ENCODE measurements at regions of chr9 and their contacts with region 1.

Region 1: DNA sequence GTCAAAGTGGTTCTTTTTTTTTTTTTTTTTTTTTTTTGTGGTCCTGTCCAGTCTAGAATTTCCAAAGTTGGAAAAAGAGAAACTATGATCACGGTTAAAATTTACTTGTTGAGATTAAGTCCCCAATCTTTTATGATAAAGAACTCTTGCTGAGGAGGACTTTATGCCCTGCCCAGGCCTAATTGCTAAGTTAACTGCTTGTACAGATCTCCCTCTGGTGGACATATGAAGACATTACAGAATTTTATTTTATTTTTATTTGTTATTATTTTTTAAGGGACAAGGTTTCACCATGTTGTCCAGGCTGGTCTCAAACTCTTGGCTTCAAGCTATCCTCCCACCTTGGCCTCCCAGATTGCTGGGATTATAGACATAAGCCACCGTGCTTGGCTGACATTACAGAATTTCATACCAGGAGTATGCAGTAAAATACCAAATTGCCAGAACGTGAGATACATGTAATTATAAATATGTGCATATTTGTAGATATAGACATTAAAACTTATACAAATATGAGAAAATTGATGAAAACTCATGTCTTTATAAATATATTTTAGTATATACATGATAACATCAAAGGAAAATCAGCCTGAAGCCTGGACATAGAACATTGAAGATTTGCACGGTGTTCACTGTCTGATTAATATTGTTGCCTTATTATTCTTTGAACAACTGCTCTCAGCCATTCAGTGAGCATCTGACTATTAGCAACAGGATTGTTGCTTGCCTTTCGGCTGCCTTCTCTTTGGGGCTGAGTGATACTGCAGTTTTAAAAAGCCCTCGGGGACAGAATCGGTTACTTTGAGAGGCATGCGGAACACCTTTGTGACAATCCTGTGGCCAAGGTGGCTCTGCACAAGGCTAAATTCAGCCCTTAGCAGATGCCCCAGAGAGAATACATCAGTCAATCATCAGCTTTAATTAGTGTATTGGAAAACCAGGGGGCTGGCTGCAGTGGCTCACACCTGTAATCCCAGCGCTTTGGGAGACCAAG is 91.0 kb downstream of the RFK start:
- DNase-seq: peak; percentile 21
- H3K4me3 Mint-ChIP-seq: no peak overlapping the region
- H3K27ac Mint-ChIP-seq: no peak overlapping the region
- H3K4me1 Mint-ChIP-seq: no peaks in the 10 kb centered on the region
- H3K27me3 Mint-ChIP-seq: peaks cover 11% of the 10 kb centered on the region

Region 2: GRCh38 chr9:74773886-74774479 is 1529.3 kb before region 1 on chr9:
- CTCF ChIA-PET with region 1: no interaction called
- intact Hi-C with region 1: loop called (anchors 5 kb)
- DNase-seq: peak; percentile 85
- H3K4me3 Mint-ChIP-seq: no peak overlapping the region
- H3K27ac Mint-ChIP-seq: no peak overlapping the region
- H3K4me1 Mint-ChIP-seq: peaks cover 14% of the 10 kb centered on the region
- H3K27me3 Mint-ChIP-seq: peaks cover 14% of the 10 kb centered on the region

Region 3: DNA sequence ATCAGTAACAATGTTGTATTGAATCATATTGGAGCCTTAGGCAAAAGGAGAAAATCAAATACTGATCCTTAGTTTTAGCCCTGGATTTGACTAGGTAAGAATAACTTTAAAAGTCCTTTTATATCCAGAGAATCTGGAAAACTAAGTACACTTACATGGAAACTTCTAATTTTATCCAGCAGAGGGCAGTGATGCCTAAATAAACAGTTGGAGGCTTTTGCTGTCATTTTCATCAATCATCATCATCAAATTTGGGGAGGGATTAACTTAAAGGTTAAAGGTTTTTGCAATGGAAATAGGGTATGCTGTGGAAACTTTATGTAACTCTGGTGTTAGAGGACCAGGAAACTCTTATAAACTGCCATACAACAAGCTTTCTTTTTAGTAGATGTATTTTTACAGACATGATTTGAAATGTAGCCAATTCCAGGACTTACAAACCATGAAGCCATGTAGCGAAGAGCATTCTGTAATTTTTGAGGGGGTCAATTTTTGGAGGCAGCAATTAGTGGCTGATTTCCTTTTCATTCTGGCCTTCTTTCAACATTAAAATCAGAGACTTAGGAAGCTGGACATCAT is 1102.3 kb before region 1 on chr9:
- CTCF ChIA-PET with region 1: no interaction called
- intact Hi-C with region 1: loop called (anchors 2 kb)
- DNase-seq: no peak
- H3K4me3 Mint-ChIP-seq: no peak overlapping the region
- H3K27ac Mint-ChIP-seq: no peak overlapping the region
- H3K4me1 Mint-ChIP-seq: peaks cover 4% of the 10 kb centered on the region
- H3K27me3 Mint-ChIP-seq: no peaks in the 10 kb centered on the region

Region 4: DNA sequence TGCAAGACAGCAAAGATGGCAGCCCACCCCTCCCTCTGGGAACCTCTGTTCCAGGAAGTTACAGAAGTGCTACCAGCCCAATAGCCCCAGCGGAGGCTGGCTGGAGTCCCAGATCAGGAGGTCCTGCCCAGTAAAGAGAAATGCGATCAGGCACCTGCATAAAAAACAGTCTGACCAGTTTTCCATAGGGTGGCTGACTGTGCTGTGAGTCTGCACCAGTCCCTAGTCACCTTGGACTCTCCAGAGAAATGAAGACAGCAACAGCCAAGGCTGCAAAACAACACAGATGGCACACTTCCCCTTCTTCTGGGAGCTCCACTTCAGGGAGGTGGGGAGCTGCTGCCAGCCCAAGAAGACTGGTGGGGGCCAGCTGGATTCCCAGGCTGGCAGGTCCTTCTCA is 678.2 kb before region 1 on chr9:
- CTCF ChIA-PET with region 1: no interaction called
- intact Hi-C with region 1: loop called (anchors 5 kb)
- DNase-seq: no peak
- H3K4me3 Mint-ChIP-seq: no peak overlapping the region
- H3K27ac Mint-ChIP-seq: no peak overlapping the region
- H3K4me1 Mint-ChIP-seq: no peaks in the 10 kb centered on the region
- H3K27me3 Mint-ChIP-seq: peaks cover 42% of the 10 kb centered on the region

Region 5: GRCh38 chr9:76086539-76086938 is 216.7 kb before region 1 on chr9:
- CTCF ChIA-PET with region 1: no interaction called
- intact Hi-C with region 1: loop called (anchors 5 kb)
- DNase-seq: no peak
- H3K4me3 Mint-ChIP-seq: no peak overlapping the region
- H3K27ac Mint-ChIP-seq: no peak overlapping the region
- H3K4me1 Mint-ChIP-seq: peaks cover 4% of the 10 kb centered on the region
- H3K27me3 Mint-ChIP-seq: no peaks in the 10 kb centered on the region

Region 6: GRCh38 chr9:76704593-76705204 is 401.5 kb after region 1 on chr9:
- CTCF ChIA-PET with region 1: no interaction called
- intact Hi-C with region 1: loop called (anchors 5 kb)
- DNase-seq: no peak
- H3K4me3 Mint-ChIP-seq: no peak overlapping the region
- H3K27ac Mint-ChIP-seq: no peak overlapping the region
- H3K4me1 Mint-ChIP-seq: no peaks in the 10 kb centered on the region
- H3K27me3 Mint-ChIP-seq: peaks cover 41% of the 10 kb centered on the region